Mammary epithelial cell (primary cell): ENCODE measurements at regions of chr11 and their contacts with region 1.

Region 1: GRCh38 chr11:75355051-75355450 is 3.6 kb upstream of the ARRB1 start:
- DNase-seq: no peak
- H3K4me3 ChIP-seq: no peak overlapping the region
- H3K27ac ChIP-seq: no peak overlapping the region
- H3K4me1 ChIP-seq: peaks cover 23% of the 10 kb centered on the region
- H3K27me3 ChIP-seq: no peaks in the 10 kb centered on the region
- CTCF ChIP-seq: no peak

Region 2: GRCh38 chr11:75371941-75372789 is 17.1 kb after region 1 on chr11:
- CTCF ChIA-PET with region 1: no interaction called
- dilution Hi-C with region 1: no loop called
- in situ Hi-C with region 1: no loop called
- intact Hi-C with region 1: loop called (anchors 2 kb)
- DNase-seq: no peak
- H3K4me3 ChIP-seq: no peak overlapping the region
- H3K27ac ChIP-seq: no peak overlapping the region
- H3K4me1 ChIP-seq: no peaks in the 10 kb centered on the region
- H3K27me3 ChIP-seq: no peaks in the 10 kb centered on the region
- CTCF ChIP-seq: no peak